ENCODE measurements at regions of chr2 and their contacts with region 1.

Region 1: GRCh38 chr2:85577386-85578242 is at the start of gene VAMP8:
- DNase-seq: peak; percentile 53 to 80
- H3K4me3 ChIP-seq: peak within 1 kb of the TSS; percentile 32 to 62 (median 41); a peak in 6 of 8 replicates
- H3K27ac ChIP-seq: no peak within 1 kb of the TSS
- H3K4me1 ChIP-seq: peaks cover 2 to 14% (median 7%) of the 10 kb centered on the region in 4 experiments
- H3K27me3 ChIP-seq: peaks cover 0 to 13% (median under 1%) of the 10 kb centered on the region in 4 experiments; a peak in 1 of 7 replicates
- CTCF ChIP-seq: no peak
- EP300 ChIP-seq: no peak
- POLR2A ChIP-seq: 0 out of 3 replicates have a peak, but pooled peaks of 1 of the 2 experiments have one; percentile 19
- RAD21 ChIP-seq: no peak
- total RNA-seq, gene VAMP8: 34.4 and 38.1 TPM in 2 replicates

Region 2: DNA sequence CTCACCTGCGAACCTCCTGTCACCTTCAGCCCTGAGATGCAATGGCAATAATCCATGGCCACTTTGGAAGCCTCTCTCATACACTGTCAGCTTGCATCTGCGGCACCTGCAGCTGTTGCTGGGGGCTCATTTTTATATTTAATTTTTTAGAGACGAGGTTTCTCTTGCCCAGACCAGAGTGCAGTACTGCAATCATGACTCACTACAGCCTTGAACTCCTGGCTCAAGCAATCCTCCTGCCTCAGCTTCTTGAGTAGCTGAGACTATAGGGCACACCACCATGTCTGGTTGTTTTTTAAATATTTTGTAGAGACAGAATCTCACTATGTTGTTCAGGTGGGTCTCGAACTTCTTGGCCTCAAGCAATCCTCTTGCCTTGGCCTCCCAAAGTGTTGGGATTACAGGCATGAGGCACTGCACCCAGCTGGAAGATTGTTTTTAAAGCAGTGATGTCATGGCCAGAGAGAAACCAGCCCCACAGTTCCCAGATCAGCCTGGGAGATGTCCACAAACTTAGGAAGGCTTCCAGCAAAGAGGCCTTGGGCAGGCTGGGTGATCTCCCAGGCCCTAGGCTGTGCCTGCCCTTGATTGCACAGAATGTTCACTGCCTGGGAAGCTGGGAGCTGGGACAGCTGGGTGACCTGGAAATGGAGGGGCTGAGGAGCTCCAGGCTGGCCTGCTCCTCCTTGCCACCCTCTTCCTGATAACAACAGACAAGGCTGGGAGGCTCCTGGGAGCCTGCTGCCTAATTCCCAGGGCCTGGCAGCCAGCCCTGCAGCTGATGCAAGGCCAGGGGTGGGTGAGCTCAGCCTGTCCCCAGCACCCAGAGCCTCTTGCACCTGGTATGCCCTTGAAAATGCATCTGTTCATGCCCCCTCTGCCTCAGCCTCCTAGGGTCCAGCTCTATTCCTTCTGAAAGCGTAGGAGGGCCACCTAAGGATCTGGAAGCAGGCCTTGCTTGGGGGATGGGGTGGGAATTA is 132.0 kb before region 1 on chr2:
- CTCF ChIA-PET with region 1: no interaction called
- POLR2A ChIA-PET with region 1: no interaction called
- DNase-seq: no peak
- H3K4me3 ChIP-seq: no peak overlapping the region
- H3K27ac ChIP-seq: no peak overlapping the region
- H3K4me1 ChIP-seq: peaks cover 0 to 5% (median 1%) of the 10 kb centered on the region in 4 experiments; a peak in 3 of 7 replicates
- H3K27me3 ChIP-seq: no peaks in the 10 kb centered on the region
- CTCF ChIP-seq: no peak
- EP300 ChIP-seq: no peak
- POLR2A ChIP-seq: no peak
- RAD21 ChIP-seq: no peak

Region 3: GRCh38 chr2:85561317-85561979 is 16.2 kb before region 1 on chr2 and contains the start of gene GGCX:
- CTCF ChIA-PET with region 1: interaction called, 3 read pairs
- POLR2A ChIA-PET with region 1: interaction called, 18 read pairs
- DNase-seq: peak; percentile 88 to 97
- H3K4me3 ChIP-seq: peak within 1 kb of the TSS; percentile 68 to 90 (median 88)
- H3K27ac ChIP-seq: peak within 1 kb of the TSS; percentile 92
- H3K4me1 ChIP-seq: no peaks in the 10 kb centered on the region
- H3K27me3 ChIP-seq: no peaks in the 10 kb centered on the region
- CTCF ChIP-seq: no peak
- EP300 ChIP-seq: no peak
- POLR2A ChIP-seq: peak; percentile 95 to 97
- RAD21 ChIP-seq: peak in 1 of 2 experiments; percentile 11; a peak in 1 of 4 replicates
- total RNA-seq, gene GGCX: 33.8 and 36.1 TPM in 2 replicates

Region 4: GRCh38 chr2:85595301-85596025 is 17.8 kb after region 1 on chr2 and contains the start of gene RNF181:
- CTCF ChIA-PET with region 1: interaction called, 7 read pairs
- POLR2A ChIA-PET with region 1: interaction called, 28 read pairs
- DNase-seq: peak; percentile 85 to 91
- H3K4me3 ChIP-seq: peak within 1 kb of the TSS; percentile 77 to 88 (median 84)
- H3K27ac ChIP-seq: peak within 1 kb of the TSS; percentile 83
- H3K4me1 ChIP-seq: peaks cover 0 to 11% (median 3%) of the 10 kb centered on the region in 4 experiments; a peak in 4 of 7 replicates
- H3K27me3 ChIP-seq: peaks cover 0 to under 1% (median 0%) of the 10 kb centered on the region in 4 experiments; a peak in 1 of 7 replicates
- CTCF ChIP-seq: no peak
- EP300 ChIP-seq: no peak
- POLR2A ChIP-seq: peak; percentile 78 to 84
- RAD21 ChIP-seq: no peak
- total RNA-seq, gene RNF181: 97.2 and 99.5 TPM in 2 replicates

Region 5: GRCh38 chr2:85602476-85603234 is 25.0 kb after region 1 on chr2 and contains the start of gene TMEM150A:
- CTCF ChIA-PET with region 1: interaction called, 4 read pairs
- POLR2A ChIA-PET with region 1: interaction called, 20 read pairs
- DNase-seq: peak; percentile 54 to 91
- H3K4me3 ChIP-seq: peak within 1 kb of the TSS; percentile 62 to 89 (median 82)
- H3K27ac ChIP-seq: peak within 1 kb of the TSS; percentile 20; the same call in 1 of the 2 replicates
- H3K4me1 ChIP-seq: peaks cover 0 to 5% (median 2%) of the 10 kb centered on the region in 4 experiments; a peak in 5 of 7 replicates
- H3K27me3 ChIP-seq: no peaks in the 10 kb centered on the region
- CTCF ChIP-seq: peak; percentile 11 to 23 (median 14); a peak in 3 of 4 replicates
- EP300 ChIP-seq: no peak
- POLR2A ChIP-seq: peak; percentile 19 to 51
- RAD21 ChIP-seq: peak in 1 of 2 experiments; percentile 7; a peak in 1 of 4 replicates
- total RNA-seq, gene TMEM150A: 19.8 and 22.4 TPM in 2 replicates

Region 6: GRCh38 chr2:85611705-85612587 is 34.3 kb after region 1 on chr2 and contains the start of gene C2orf68:
- CTCF ChIA-PET with region 1: no interaction called
- POLR2A ChIA-PET with region 1: interaction called, 12 read pairs
- DNase-seq: peak; percentile 70 to 92
- H3K4me3 ChIP-seq: peak within 1 kb of the TSS; percentile 78 to 87 (median 84)
- H3K27ac ChIP-seq: peak within 1 kb of the TSS; percentile 73
- H3K4me1 ChIP-seq: peaks cover 0 to 1% (median under 1%) of the 10 kb centered on the region in 4 experiments; a peak in 4 of 7 replicates
- H3K27me3 ChIP-seq: no peaks in the 10 kb centered on the region
- CTCF ChIP-seq: no peak
- EP300 ChIP-seq: no peak
- POLR2A ChIP-seq: peak; percentile 73 to 84
- RAD21 ChIP-seq: no peak
- total RNA-seq, gene C2orf68: 40.9 and 46.3 TPM in 2 replicates

Region 7: DNA sequence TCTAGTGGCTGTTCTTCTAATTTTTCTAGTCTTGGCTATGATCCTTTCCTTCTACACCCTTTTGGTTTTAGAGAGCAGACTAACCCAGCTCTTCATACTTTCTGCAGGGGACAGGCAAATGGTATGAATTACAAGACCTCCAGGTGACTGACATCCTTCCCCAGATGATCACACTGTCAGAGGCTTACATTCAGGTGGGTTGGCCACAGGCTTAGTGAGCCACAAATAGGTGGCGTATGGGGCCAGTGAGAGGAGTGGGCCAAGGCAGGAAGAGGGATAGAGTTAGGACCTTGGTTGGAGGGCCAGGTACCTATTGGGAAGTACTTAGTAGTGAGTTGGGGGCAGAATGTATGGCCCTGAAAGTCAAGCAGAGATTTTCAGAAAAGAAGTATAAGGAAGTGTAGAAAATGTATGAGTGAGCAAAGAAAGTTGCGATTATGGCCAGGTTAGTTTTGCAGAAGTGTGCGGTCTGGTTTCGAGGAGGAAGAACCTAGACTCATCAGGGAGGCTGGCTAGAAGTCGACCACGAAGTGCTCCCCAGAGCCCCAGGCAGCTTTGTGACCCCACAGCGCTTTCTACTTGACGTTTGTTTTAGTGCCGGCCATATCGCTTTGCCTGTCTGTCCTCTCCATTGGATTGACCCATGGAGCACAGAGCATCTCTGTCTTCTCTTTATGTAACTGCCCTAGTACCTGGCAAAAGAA is 70.4 kb after region 1 on chr2:
- CTCF ChIA-PET with region 1: no interaction called
- POLR2A ChIA-PET with region 1: no interaction called
- DNase-seq: no peak
- H3K4me3 ChIP-seq: no peak overlapping the region
- H3K27ac ChIP-seq: no peak overlapping the region
- H3K4me1 ChIP-seq: no peaks in the 10 kb centered on the region
- H3K27me3 ChIP-seq: no peaks in the 10 kb centered on the region
- CTCF ChIP-seq: no peak
- EP300 ChIP-seq: no peak
- POLR2A ChIP-seq: no peak
- RAD21 ChIP-seq: no peak